A549 (cell line): ENCODE measurements at regions of chr2 and their contacts with region 1.

Region 1: DNA sequence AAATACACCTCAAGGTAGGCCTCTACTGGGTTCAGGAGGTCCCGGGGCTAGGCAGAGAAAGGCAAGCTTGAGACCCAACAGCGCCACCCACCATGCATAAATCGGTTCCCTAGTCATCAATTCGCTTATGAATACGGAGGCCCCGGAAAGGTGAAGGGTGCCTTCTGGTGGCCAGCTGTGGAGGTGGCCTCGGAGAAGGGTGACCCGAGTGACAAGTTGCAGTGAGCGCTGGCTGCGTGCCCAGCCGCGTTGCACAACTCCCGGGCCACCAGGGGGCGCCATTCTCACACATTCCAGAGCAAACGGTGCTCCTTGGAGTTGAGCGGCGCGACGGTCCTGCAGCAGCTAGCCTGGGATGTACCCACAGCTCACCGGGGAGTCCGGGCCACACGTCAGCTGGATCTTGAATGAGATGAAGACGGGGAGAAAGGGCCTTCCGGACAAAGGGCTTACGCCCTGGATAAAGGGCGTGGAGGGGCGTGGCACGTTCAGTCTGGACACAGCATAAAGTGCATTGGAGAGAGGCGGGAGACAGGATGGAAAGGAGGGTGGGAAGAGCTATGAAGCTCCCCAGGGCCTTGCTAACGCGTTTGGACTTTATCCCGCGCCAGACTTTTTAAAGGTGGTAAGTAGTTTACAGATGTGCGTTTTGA is 20.4 kb downstream of the TMSB10 start:
- DNase-seq: peak; percentile 94 to 100
- ATAC-seq: peak; percentile 88 to 89
- H3K4me3 ChIP-seq: peak overlapping the region; percentile 64
- H3K27ac ChIP-seq: peak overlapping the region; percentile 91 to 93
- H3K4me1 ChIP-seq: peaks cover 29% of the 10 kb centered on the region
- CTCF ChIP-seq: peak; percentile 100
- EP300 ChIP-seq: no peak
- POLR2A ChIP-seq: peak; percentile 42
- RAD21 ChIP-seq: peak; percentile 92 to 99

Region 2: DNA sequence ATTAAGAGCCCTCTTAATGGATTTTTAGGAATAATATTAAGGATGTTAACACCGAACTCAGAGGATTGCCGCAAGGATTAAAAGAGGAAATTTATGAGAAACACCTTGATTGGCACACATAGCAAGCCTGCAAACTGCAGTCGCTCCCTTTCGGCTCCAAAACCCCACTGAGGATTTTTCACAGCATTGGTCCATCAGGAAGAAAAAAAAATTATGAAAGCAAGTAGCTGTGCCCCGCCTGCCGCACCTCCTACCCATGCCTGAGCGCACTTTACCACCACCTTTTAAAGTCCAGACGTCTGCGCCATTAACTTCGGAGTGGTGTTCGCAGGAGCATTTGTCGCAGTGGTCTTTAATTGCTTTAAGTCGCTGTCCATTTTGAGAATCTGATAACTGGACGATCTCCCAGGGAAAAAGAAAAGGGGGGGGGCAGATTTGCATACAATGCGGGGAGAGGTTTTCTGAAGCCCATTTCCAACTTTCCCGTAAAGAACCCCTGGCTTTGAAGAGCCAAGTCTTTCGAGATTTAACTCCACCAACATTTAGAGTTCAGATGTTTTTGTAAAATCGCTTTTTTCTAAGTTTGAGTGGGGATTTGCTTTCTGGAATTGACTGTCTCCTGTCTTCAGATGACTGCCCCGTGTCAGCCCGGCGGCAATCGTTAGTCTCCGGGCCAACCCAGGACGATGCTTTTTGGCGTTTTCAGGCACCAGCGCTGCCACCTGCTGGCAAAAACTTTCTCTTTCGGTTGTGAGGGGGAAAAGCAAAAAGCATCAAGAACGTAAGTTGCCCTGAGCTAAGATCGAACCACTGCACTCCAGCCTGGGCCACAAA is 44.1 kb before region 1 on chr2:
- CTCF ChIA-PET with region 1: interaction called, 41 read pairs
- POLR2A ChIA-PET with region 1: interaction called, 10 read pairs
- DNase-seq: peak; percentile 86 to 88
- ATAC-seq: peak; percentile 71 to 88
- H3K4me3 ChIP-seq: peak overlapping the region; percentile 50
- H3K27ac ChIP-seq: peak overlapping the region; percentile 64 to 89; a peak in 5 of 6 replicates
- H3K4me1 ChIP-seq: peaks cover 3% of the 10 kb centered on the region
- CTCF ChIP-seq: peak; percentile 86
- EP300 ChIP-seq: no peak
- POLR2A ChIP-seq: no peak
- RAD21 ChIP-seq: peak; percentile 83 to 84

Region 3: GRCh38 chr2:84905181-84906107 is 20.4 kb before region 1 on chr2 and contains the start of gene TMSB10:
- CTCF ChIA-PET with region 1: interaction called, 178 read pairs
- POLR2A ChIA-PET with region 1: interaction called, 131 read pairs
- DNase-seq: peak; percentile 82 to 91
- ATAC-seq: peak; percentile 60 to 70
- H3K4me3 ChIP-seq: peak within 1 kb of the TSS; percentile 87
- H3K27ac ChIP-seq: peak within 1 kb of the TSS; percentile 89 to 97
- H3K4me1 ChIP-seq: peaks cover 16% of the 10 kb centered on the region
- CTCF ChIP-seq: peak; percentile 30; the same call in 1 of the 3 replicates
- EP300 ChIP-seq: 0 out of 5 replicates have a peak, but pooled peaks of 1 of the 2 experiments have one; percentile 26
- POLR2A ChIP-seq: peak; percentile 98
- RAD21 ChIP-seq: peak in 1 of 2 experiments; percentile 37; a peak in 1 of 5 replicates
- polyA plus RNA-seq, gene TMSB10: 2,292 and 3,109 TPM in 2 replicates

Region 4: GRCh38 chr2:84958135-84959044 is 32.5 kb after region 1 on chr2:
- CTCF ChIA-PET with region 1: interaction called, 66 read pairs
- POLR2A ChIA-PET with region 1: interaction called, 21 read pairs
- DNase-seq: peak; percentile 96 to 98
- ATAC-seq: peak; percentile 91 to 92
- H3K4me3 ChIP-seq: peak overlapping the region; percentile 21; the same call in 1 of the 3 replicates
- H3K27ac ChIP-seq: peak overlapping the region; percentile 90
- H3K4me1 ChIP-seq: peaks cover 65% of the 10 kb centered on the region
- CTCF ChIP-seq: no peak
- EP300 ChIP-seq: peak; percentile 22 to 82; a peak in 1 of 5 replicates
- POLR2A ChIP-seq: no peak
- RAD21 ChIP-seq: peak in 1 of 2 experiments; percentile 22; a peak in 4 of 5 replicates

Region 5: DNA sequence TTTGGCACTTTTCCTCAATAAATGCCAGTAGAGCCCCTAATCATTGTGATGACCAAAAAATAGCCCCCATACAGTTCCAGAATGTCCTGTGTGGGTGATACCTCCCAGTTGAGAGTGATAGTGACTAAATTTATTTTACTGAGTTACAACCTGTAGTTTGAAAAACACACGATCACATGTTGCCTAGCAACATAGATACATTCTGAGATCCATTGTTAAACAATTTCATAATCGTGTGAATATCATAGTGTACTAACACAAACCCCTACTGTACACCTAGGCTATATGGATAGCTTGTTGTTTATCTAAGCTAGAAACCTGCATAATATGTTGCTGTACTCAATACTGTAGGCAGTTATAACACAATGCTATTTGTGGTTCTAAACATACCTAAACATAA is 75.7 kb after region 1 on chr2:
- CTCF ChIA-PET with region 1: interaction called, 38 read pairs
- POLR2A ChIA-PET with region 1: no interaction called
- DNase-seq: no peak
- ATAC-seq: peak; percentile 36 to 39; a peak in 4 of 6 replicates
- H3K4me3 ChIP-seq: no peak overlapping the region
- H3K27ac ChIP-seq: no peak overlapping the region
- H3K4me1 ChIP-seq: peaks cover 51% of the 10 kb centered on the region
- CTCF ChIP-seq: no peak
- EP300 ChIP-seq: no peak
- POLR2A ChIP-seq: no peak
- RAD21 ChIP-seq: no peak

Region 6: DNA sequence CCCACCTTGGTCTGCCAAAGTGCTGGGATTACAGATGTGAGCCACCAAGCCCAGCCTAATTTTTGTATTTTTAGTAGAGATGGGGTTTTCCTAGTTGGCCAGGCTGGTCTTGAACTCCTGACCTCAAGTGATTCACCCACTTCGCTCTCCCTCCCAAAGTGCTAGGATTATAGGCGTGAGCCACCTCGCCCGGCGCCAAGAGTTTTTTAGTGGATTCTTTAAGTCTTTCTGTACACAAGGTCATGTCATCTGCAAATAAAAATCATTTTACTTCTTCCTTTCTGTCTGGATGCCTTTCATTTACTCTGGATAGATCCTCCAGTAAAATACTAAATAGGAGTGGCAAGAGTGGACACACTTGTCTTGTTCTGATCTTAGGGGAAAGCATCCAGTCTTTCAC is 106.8 kb after region 1 on chr2:
- CTCF ChIA-PET with region 1: interaction called, 12 read pairs
- POLR2A ChIA-PET with region 1: no interaction called
- DNase-seq: peak in 1 of 2 experiments; percentile 66
- ATAC-seq: peak in 1 of 2 experiments; percentile 70; a peak in 3 of 6 replicates
- H3K4me3 ChIP-seq: no peak overlapping the region
- H3K27ac ChIP-seq: no peak overlapping the region
- H3K4me1 ChIP-seq: peaks cover 14% of the 10 kb centered on the region
- CTCF ChIP-seq: no peak
- EP300 ChIP-seq: no peak
- POLR2A ChIP-seq: no peak
- RAD21 ChIP-seq: no peak

Region 7: DNA sequence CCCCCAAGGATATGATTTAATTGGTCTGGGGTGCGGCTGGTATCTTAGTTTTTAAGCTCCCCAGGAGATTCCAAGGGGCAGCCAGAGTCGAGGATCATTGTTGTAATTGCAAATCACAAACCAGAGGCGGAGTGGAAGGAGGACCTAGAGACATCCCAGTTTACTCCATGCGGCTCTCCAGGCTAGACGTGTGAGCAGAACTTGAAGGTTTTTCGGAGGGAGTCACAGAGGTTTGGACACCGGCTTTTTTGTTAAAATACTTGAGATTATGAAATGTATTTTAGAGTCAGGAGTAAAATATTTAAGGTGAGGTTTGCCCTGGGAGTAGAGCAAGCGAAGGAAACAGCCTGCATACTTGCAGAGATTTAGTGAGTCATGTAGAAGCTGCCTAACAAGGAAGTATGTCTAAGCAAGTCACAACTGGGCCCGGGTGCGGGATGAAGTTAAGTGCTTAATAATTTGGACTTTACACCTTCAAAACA is 362.4 kb after region 1 on chr2:
- CTCF ChIA-PET with region 1: interaction called, 14 read pairs
- POLR2A ChIA-PET with region 1: interaction called, 5 read pairs
- DNase-seq: peak; percentile 82 to 86
- ATAC-seq: peak; percentile 78 to 83
- H3K4me3 ChIP-seq: no peak overlapping the region
- H3K27ac ChIP-seq: peak overlapping the region; percentile 62 to 82
- H3K4me1 ChIP-seq: peaks cover 31% of the 10 kb centered on the region
- CTCF ChIP-seq: no peak
- EP300 ChIP-seq: no peak
- POLR2A ChIP-seq: no peak
- RAD21 ChIP-seq: no peak